Right lobe of liver (tissue), 6 donors: ENCODE measurements at regions of chr5 and their contacts with region 1.

Region 1: GRCh38 chr5:14644623-14645237 is 19.8 kb upstream of the OTULIN start:
- DNase-seq: no peak
- ATAC-seq: no peak
- H3K4me3 ChIP-seq: no peak overlapping the region
- H3K27ac ChIP-seq: no peak overlapping the region
- H3K4me1 ChIP-seq: no peaks in the 10 kb centered on the region
- H3K27me3 ChIP-seq: no peaks in the 10 kb centered on the region
- CTCF ChIP-seq: no peak
- POLR2A ChIP-seq: no peak

Region 2: GRCh38 chr5:14399054-14399692 is 245.6 kb before region 1 on chr5:
- intact Hi-C with region 1: loop called (anchors 5 to 10 kb)
- DNase-seq: no peak
- ATAC-seq: peak; percentile 63 to 72 (median 67)
- H3K4me3 ChIP-seq: no peak overlapping the region
- H3K27ac ChIP-seq: no peak overlapping the region
- H3K4me1 ChIP-seq: no peaks in the 10 kb centered on the region
- H3K27me3 ChIP-seq: no peaks in the 10 kb centered on the region
- CTCF ChIP-seq: peak; percentile 45 to 73 (median 68)
- POLR2A ChIP-seq: no peak

Region 3: GRCh38 chr5:14405267-14405666 is 239.5 kb before region 1 on chr5:
- intact Hi-C with region 1: loop called in 1 of 2 experiments (anchors 10 kb)
- DNase-seq: no peak
- ATAC-seq: no peak
- H3K4me3 ChIP-seq: no peak overlapping the region
- H3K27ac ChIP-seq: no peak overlapping the region
- H3K4me1 ChIP-seq: no peaks in the 10 kb centered on the region
- H3K27me3 ChIP-seq: no peaks in the 10 kb centered on the region
- CTCF ChIP-seq: peak in 1 of 4 donors; percentile 5
- POLR2A ChIP-seq: no peak

Region 4: GRCh38 chr5:14700478-14701436 is 56.0 kb after region 1 on chr5:
- intact Hi-C with region 1: no loop called
- DNase-seq: no peak
- ATAC-seq: peak in 1 of 4 donors; percentile 7
- H3K4me3 ChIP-seq: no peak overlapping the region
- H3K27ac ChIP-seq: peak overlapping the region in 1 of 3 donors; percentile 15
- H3K4me1 ChIP-seq: peaks cover 0 to 61% (median 7%) of the 10 kb centered on the region in 4 donors
- H3K27me3 ChIP-seq: no peaks in the 10 kb centered on the region
- CTCF ChIP-seq: no peak
- POLR2A ChIP-seq: no peak